ENCODE measurements at regions of chr5 and their contacts with region 1.

Region 1: GRCh38 chr5:97534166-97534565 is 351.1 kb upstream of the RIOK2 start:
- DNase-seq: no peak
- ATAC-seq: peak; percentile 90
- H3K4me3 ChIP-seq: no peak overlapping the region
- H3K27ac ChIP-seq: no peak overlapping the region
- H3K4me1 ChIP-seq: no peaks in the 10 kb centered on the region
- H3K27me3 ChIP-seq: no peaks in the 10 kb centered on the region
- CTCF ChIP-seq: peak; percentile 57 to 66 (median 59); a peak in 5 of 6 replicates
- EP300 ChIP-seq: no peak
- POLR2A ChIP-seq: no peak
- RAD21 ChIP-seq: peak; percentile 85

Region 2: DNA sequence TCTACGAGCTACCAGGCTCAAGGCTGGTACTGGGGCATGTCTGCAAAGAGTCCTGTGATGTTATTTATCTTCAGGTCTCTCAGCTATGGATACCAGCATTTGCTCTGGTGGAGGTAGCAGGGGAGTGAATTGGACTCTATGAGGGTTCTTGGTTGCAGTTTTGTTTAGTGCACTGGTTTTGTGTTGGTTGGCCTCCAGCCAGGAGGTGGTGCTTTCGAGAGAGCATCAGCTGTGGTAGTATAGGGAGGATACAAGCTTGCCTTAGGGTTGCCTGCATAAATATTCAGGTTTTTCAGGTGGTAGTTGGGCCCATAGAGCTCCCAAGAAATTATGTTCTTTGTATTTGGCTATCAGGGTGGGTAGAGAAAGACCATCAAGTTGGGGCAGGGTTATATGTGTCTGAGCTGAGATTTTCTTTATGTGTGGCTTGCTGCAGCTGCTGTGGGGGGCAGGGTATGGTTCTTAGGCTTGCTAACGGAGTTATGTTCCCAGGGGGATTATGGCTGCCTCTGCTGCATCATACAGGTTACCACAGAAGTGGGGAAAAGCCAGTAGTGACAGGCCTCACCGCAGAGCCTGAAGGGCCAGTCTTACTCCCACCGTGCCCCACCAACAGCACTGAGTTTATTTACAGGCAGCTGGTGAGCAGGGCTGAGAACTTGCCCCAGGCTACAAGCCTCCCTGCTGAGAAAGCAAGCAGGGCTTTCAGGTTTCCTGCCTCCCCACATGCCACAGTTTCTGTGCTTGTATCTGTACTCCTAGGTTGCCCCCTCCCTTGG is 341.4 kb before region 1 on chr5:
- CTCF ChIA-PET with region 1: interaction called, 4 read pairs
- POLR2A ChIA-PET with region 1: no interaction called
- RAD21 ChIA-PET with region 1: interaction called, 3 read pairs
- SMC1A ChIA-PET with region 1: no interaction called
- in situ Hi-C with region 1: no loop called
- intact Hi-C with region 1: loop called (anchors 5 kb)
- DNase-seq: peak; percentile 63
- ATAC-seq: peak; percentile 94
- H3K4me3 ChIP-seq: 0 out of 2 replicates have a peak overlapping the region, but pooled peaks have one; percentile 32
- H3K27ac ChIP-seq: peak overlapping the region; percentile 73
- H3K4me1 ChIP-seq: peaks cover 8% of the 10 kb centered on the region
- H3K27me3 ChIP-seq: no peaks in the 10 kb centered on the region
- CTCF ChIP-seq: no peak
- EP300 ChIP-seq: peak; percentile 28 to 49; a peak in 1 of 4 replicates
- POLR2A ChIP-seq: no peak
- RAD21 ChIP-seq: no peak

Region 3: DNA sequence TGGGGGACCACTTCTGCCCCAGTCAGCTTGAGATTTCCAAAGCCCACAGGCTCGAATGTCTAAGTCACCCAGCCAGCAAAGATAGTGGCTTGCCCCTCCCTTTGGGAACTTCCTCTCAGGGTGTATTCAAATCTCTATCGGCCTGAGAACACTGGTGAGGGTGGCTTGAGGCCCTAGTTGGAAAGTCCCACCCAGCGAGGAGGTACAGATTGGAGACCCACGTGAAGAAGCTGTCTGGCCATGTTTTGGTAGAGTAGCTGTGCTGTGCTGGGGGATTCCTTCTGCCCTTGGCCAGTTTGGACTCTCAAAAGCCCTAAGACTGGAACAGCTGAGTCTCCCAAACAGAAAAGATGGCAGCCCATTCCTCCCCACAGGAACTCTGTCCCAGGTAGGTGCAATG is 178.4 kb before region 1 on chr5:
- CTCF ChIA-PET with region 1: interaction called, 62 read pairs
- POLR2A ChIA-PET with region 1: interaction called, 3 read pairs
- RAD21 ChIA-PET with region 1: interaction called, 54 read pairs
- SMC1A ChIA-PET with region 1: interaction called, 17 read pairs
- in situ Hi-C with region 1: no loop called
- intact Hi-C with region 1: loop called (anchors 1 kb)
- DNase-seq: peak; percentile 74
- ATAC-seq: peak; percentile 90
- H3K4me3 ChIP-seq: peak overlapping the region; percentile 68
- H3K27ac ChIP-seq: peak overlapping the region; percentile 68
- H3K4me1 ChIP-seq: peaks cover 11% of the 10 kb centered on the region
- H3K27me3 ChIP-seq: no peaks in the 10 kb centered on the region
- CTCF ChIP-seq: no peak
- EP300 ChIP-seq: 0 out of 4 replicates have a peak, but pooled peaks of 1 of the 2 experiments have one; percentile 4
- POLR2A ChIP-seq: 0 out of 2 replicates have a peak, but pooled peaks have one; percentile 32
- RAD21 ChIP-seq: no peak

Region 4: DNA sequence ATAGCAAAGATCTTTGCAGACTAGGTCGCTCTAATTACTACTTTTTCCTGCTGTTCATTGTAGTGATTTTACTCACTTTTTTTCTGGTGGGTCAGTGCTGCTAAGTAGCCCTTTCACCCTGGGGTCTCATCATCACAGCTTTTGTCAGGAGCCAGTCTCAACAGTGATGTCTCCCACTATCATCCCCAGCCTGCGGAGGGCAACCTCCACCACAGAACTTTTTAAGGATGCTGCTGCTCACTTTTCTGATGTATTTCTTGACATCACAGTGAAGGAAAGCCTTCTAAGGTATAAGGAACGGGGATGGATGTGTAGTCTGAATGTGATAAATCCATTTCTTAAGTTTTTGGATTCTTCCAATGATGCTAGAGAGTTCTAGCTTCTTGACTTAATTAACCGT is 108.7 kb before region 1 on chr5:
- CTCF ChIA-PET with region 1: interaction called, 34 read pairs
- POLR2A ChIA-PET with region 1: no interaction called
- RAD21 ChIA-PET with region 1: interaction called, 28 read pairs
- SMC1A ChIA-PET with region 1: interaction called, 33 read pairs
- in situ Hi-C with region 1: no loop called
- intact Hi-C with region 1: loop called (anchors 1 kb)
- DNase-seq: no peak
- ATAC-seq: peak; percentile 47; the same call in 2 of the 3 replicates
- H3K4me3 ChIP-seq: no peak overlapping the region
- H3K27ac ChIP-seq: no peak overlapping the region
- H3K4me1 ChIP-seq: no peaks in the 10 kb centered on the region
- H3K27me3 ChIP-seq: no peaks in the 10 kb centered on the region
- CTCF ChIP-seq: peak; percentile 34 to 51 (median 42)
- EP300 ChIP-seq: no peak
- POLR2A ChIP-seq: no peak
- RAD21 ChIP-seq: peak; percentile 82

Region 5: GRCh38 chr5:97547999-97548738 is 14.0 kb after region 1 on chr5:
- CTCF ChIA-PET with region 1: interaction called, 33 read pairs
- POLR2A ChIA-PET with region 1: no interaction called
- RAD21 ChIA-PET with region 1: interaction called, 5 read pairs
- SMC1A ChIA-PET with region 1: interaction called, 14 read pairs
- in situ Hi-C with region 1: no loop called
- intact Hi-C with region 1: no loop called
- DNase-seq: peak; percentile 42
- ATAC-seq: peak; percentile 85
- H3K4me3 ChIP-seq: no peak overlapping the region
- H3K27ac ChIP-seq: peak overlapping the region; percentile 45; the same call in 1 of the 2 replicates
- H3K4me1 ChIP-seq: peaks cover 11% of the 10 kb centered on the region
- H3K27me3 ChIP-seq: no peaks in the 10 kb centered on the region
- CTCF ChIP-seq: no peak
- EP300 ChIP-seq: peak; percentile 23 to 68; a peak in 2 of 4 replicates
- POLR2A ChIP-seq: no peak
- RAD21 ChIP-seq: no peak

Region 6: DNA sequence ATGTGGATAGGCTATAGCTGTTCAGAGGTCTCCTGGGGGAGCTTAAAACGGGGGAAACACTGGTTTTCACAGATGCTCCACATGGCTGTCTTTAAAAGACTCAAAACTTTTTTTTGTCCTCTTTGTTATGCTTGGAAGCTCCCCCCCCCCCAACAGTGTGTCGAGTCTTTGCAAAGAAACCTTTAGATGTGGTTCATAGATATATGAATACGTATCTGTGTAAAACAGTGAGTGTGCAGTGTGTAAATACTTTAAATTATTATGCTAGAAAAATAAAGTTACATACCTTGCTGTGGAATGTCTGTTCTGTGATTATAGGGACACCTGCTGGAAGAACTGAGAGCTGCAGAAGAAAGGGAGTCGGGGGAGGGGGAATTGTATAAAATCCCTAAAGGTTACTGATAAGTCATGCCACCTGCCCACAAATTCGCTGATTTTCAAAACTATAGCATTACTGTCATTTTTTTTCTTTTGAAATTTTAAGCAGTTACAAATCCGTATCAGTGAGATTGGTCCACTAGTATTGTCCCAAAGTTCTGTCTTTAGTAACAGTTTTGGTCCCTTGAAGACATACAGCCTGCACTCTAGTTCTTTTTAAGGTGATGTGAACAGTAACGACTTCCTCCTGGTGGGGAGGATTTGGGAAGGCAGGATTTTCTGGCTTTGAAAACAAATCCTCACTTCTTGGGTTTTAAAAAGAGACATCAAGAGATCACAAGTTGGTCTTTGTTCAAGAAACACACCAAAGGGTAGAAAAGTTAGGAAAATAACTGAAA is 1262.2 kb after region 1 on chr5:
- CTCF ChIA-PET with region 1: interaction called, 14 read pairs
- POLR2A ChIA-PET with region 1: no interaction called
- RAD21 ChIA-PET with region 1: interaction called, 5 read pairs
- SMC1A ChIA-PET with region 1: no interaction called
- in situ Hi-C with region 1: no loop called
- intact Hi-C with region 1: no loop called
- DNase-seq: no peak
- ATAC-seq: peak; percentile 90
- H3K4me3 ChIP-seq: no peak overlapping the region
- H3K27ac ChIP-seq: no peak overlapping the region
- H3K4me1 ChIP-seq: no peaks in the 10 kb centered on the region
- H3K27me3 ChIP-seq: no peaks in the 10 kb centered on the region
- CTCF ChIP-seq: peak; percentile 70 to 80 (median 75)
- EP300 ChIP-seq: no peak
- POLR2A ChIP-seq: no peak
- RAD21 ChIP-seq: peak; percentile 89

Measured in GM12878 (cell line).